Lower lobe of right lung (tissue), 2 donors: ENCODE measurements at regions of chr20 and their contacts with region 1.

Region 1: DNA sequence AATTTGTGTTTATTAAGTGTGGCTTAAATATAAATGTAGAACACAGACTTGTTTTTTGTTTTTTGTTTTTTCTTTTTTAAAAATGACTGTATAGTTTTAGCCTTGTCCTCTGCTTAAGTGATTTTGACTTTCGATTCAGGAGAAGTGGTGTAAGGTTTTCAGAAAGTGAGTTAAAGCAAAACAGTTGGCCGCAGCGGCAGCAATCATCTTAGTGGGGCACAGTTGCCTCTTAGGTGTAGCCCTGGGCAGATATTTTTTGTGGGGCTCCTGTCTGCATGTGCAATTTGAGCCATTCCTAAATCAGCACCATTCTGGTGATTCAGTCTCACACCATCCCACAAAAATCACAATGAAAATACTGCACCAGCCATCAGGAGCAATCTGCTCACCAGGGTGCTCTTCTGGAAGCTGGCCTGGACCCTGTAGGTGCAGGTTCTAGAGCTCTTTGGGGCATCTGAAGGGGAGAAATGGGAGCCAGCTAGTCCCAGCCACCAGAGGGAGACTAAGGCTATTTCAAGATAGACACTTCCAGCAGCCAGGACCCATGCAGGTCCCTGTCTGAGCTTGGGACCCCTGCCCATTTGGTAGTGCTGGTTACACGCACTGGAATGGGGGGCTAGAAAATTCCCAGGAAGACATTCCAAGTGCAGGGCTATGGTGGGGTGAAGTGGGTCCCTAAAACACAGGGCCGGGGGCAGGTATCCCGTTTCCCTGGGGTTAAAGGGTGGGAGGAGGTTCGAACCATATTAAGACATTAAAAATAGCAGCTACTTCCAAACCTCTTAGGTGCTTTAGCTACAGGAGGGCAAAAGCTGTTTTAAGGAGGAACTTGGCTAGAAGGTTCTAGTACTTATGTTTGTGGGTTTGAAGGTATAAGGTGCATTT is 156.6 kb downstream of the NFATC2 start:
- DNase-seq: no peak
- ATAC-seq: peak; percentile 27 to 37
- H3K4me3 ChIP-seq: no peak overlapping the region
- H3K27ac ChIP-seq: no peak overlapping the region
- H3K4me1 ChIP-seq: peaks cover 12% of the 10 kb centered on the region
- H3K27me3 ChIP-seq: no peaks in the 10 kb centered on the region
- CTCF ChIP-seq: peak; percentile 37

Region 2: GRCh38 chr20:51326201-51326819 is 59.6 kb before region 1 on chr20:
- intact Hi-C with region 1: no loop called
- DNase-seq: peak; percentile 61
- ATAC-seq: peak in 1 of 2 donors; percentile 68
- H3K4me3 ChIP-seq: no peak overlapping the region
- H3K27ac ChIP-seq: no peak overlapping the region
- H3K4me1 ChIP-seq: no peaks in the 10 kb centered on the region
- H3K27me3 ChIP-seq: no peaks in the 10 kb centered on the region
- CTCF ChIP-seq: peak; percentile 75

Region 3: DNA sequence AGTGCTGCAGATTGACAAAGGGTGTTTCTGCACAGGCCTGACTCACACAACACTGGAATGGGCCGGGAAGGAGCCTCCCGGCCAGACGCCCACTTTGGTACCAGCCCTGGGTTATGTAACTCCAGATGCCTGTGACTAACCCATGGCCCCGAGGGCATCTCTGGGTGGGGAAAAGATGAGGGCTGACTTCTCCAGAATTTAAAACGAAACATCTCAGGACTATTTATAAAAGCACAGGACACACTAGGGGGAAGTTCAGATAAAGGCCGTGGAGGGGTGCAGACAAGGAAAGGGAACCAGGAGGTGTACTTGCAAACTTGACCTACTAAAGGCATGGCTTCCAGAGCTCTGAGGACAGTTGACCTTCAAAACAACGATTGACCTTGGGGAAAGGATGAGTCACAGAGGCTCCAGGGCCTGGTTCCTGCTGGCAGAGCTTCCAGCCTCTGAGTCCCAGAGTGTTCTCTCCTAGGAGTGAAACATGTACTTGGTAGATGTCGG is 40.2 kb before region 1 on chr20:
- intact Hi-C with region 1: no loop called
- DNase-seq: no peak
- ATAC-seq: peak in 1 of 2 donors; percentile 40
- H3K4me3 ChIP-seq: no peak overlapping the region
- H3K27ac ChIP-seq: no peak overlapping the region
- H3K4me1 ChIP-seq: no peaks in the 10 kb centered on the region
- H3K27me3 ChIP-seq: no peaks in the 10 kb centered on the region
- CTCF ChIP-seq: no peak

Region 4: DNA sequence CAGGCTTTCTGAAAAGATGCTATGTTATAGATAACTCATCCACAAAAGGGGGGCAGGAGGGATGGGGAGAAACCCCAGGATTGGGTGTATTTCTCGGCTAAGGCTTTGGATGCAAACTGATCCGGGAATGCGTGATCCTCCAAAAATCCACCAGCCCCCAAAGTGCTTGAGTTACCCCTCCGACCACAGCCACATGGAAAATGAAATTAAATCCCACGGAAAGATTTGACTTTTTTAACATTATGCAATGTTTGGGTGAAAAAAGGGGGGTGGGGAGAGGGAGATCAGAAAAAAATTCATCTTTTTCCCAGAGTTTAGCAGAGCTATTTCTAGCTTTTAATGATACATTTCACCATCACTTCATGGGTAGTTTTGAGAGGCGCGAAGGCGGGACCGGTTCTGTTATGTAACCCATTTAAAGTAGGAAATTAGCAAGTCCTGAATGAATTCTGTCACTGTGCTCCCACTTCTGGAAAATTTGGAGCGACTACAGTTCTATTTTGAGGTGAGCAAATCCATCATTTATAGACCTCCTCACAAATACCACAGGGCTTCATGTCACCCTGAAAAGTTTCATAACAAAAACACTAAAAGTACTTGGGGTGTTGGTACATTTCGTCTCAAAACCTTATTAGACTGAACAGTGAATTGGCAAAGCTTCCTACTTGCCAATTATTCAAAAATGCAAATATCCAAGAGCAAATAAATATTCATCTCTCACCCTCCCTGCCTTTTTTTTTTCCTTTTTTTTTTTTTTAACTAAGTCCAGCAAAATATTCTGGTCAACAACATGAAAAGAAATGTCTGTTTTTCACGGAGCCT is 208.6 kb after region 1 on chr20:
- intact Hi-C with region 1: loop called (anchors 5 kb)
- DNase-seq: no peak
- ATAC-seq: peak in 1 of 2 donors; percentile 41
- H3K4me3 ChIP-seq: no peak overlapping the region
- H3K27ac ChIP-seq: no peak overlapping the region
- H3K4me1 ChIP-seq: peaks cover 8% of the 10 kb centered on the region
- H3K27me3 ChIP-seq: no peaks in the 10 kb centered on the region
- CTCF ChIP-seq: no peak